ENCODE measurements at regions of chrX and their contacts with region 1.

Region 1: GRCh38 chrX:68146054-68146453 is 287.2 kb downstream of the OPHN1 start:
- DNase-seq: peak; percentile 39
- ATAC-seq: peak; percentile 95
- H3K4me3 ChIP-seq: no peak overlapping the region
- H3K27ac ChIP-seq: no peak overlapping the region
- H3K4me1 ChIP-seq: no peaks in the 10 kb centered on the region
- H3K27me3 ChIP-seq: no peaks in the 10 kb centered on the region
- CTCF ChIP-seq: peak; percentile 58
- EP300 ChIP-seq: no peak
- POLR2A ChIP-seq: no peak
- RAD21 ChIP-seq: no peak

Region 2: GRCh38 chrX:67555578-67556203 is 590.4 kb before region 1 on chrX:
- CTCF ChIA-PET with region 1: no interaction called
- POLR2A ChIA-PET with region 1: no interaction called
- in situ Hi-C with region 1: loop called (anchors 25 kb)
- intact Hi-C with region 1: no loop called
- DNase-seq: peak; percentile 8
- ATAC-seq: peak; percentile 75
- H3K4me3 ChIP-seq: no peak overlapping the region
- H3K27ac ChIP-seq: no peak overlapping the region
- H3K4me1 ChIP-seq: no peaks in the 10 kb centered on the region
- H3K27me3 ChIP-seq: no peaks in the 10 kb centered on the region
- CTCF ChIP-seq: peak; percentile 61
- EP300 ChIP-seq: no peak
- POLR2A ChIP-seq: no peak
- RAD21 ChIP-seq: no peak

Region 3: GRCh38 chrX:68018681-68019111 is 127.4 kb before region 1 on chrX:
- CTCF ChIA-PET with region 1: interaction called, 9 read pairs
- POLR2A ChIA-PET with region 1: no interaction called
- in situ Hi-C with region 1: no loop called
- intact Hi-C with region 1: loop called (anchors 1 kb)
- DNase-seq: peak; percentile 28
- ATAC-seq: peak; percentile 99
- H3K4me3 ChIP-seq: no peak overlapping the region; a peak in 1 of 6 replicates
- H3K27ac ChIP-seq: no peak overlapping the region
- H3K4me1 ChIP-seq: no peaks in the 10 kb centered on the region
- H3K27me3 ChIP-seq: no peaks in the 10 kb centered on the region
- CTCF ChIP-seq: peak; percentile 64
- EP300 ChIP-seq: no peak
- POLR2A ChIP-seq: no peak
- RAD21 ChIP-seq: no peak

Measured in HepG2 (cell line).